ENCODE measurements at regions of chr3 and their contacts with region 1.

Region 1: DNA sequence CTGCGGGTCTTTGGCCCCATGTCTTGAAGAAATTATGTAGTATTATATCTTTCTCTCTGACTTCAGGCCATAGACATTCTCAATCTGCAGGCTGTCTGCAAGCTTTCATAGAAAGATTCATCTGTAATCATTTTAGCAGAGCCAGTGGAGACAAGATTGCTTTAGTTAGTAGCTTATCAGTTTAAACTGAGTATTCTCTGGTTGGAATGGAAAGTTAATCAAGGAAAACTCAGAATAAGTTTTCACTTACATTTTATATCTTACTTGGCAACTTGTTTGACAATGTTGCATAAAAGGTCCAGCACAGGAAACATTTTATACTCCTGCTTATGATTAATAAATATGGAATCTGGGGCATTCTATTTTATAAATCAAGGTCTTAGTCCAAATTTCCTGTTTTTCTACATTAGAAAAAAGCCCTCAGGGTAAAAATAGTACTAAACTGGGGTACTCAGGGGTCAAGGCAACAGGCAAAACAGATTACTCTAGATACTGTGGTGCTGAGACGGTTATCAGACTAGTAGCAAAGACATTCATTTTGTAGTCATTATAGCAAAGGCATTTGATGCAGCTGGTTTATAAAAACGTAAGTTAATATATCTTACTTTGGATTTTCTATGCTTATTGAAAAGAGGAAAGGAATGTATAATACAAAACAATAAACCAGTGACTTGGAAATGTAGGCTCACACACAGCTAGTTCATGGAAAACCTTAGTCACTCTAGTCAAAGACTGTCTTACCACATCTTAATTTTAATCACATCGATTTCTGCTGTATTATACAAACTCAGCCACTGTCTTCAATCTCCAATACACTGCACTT is 45.2 kb upstream of the FILIP1L start:
- DNase-seq: no peak
- ATAC-seq: peak; percentile 39
- H3K4me3 ChIP-seq: no peak overlapping the region
- H3K27ac ChIP-seq: peak overlapping the region; percentile 79 to 96
- H3K4me1 ChIP-seq: peaks cover 0 to 11% of the 10 kb centered on the region in 2 donors
- H3K27me3 ChIP-seq: no peaks in the 10 kb centered on the region

Region 2: GRCh38 chr3:99842826-99843589 is 316.5 kb before region 1 on chr3:
- intact Hi-C with region 1: loop called in 1 of 2 experiments (anchors 5 kb)
- DNase-seq: no peak
- ATAC-seq: peak; percentile 70
- H3K4me3 ChIP-seq: no peak overlapping the region
- H3K27ac ChIP-seq: peak overlapping the region; percentile 63 to 91
- H3K4me1 ChIP-seq: peaks cover 2 to 3% of the 10 kb centered on the region in 2 donors
- H3K27me3 ChIP-seq: no peaks in the 10 kb centered on the region

Region 3: DNA sequence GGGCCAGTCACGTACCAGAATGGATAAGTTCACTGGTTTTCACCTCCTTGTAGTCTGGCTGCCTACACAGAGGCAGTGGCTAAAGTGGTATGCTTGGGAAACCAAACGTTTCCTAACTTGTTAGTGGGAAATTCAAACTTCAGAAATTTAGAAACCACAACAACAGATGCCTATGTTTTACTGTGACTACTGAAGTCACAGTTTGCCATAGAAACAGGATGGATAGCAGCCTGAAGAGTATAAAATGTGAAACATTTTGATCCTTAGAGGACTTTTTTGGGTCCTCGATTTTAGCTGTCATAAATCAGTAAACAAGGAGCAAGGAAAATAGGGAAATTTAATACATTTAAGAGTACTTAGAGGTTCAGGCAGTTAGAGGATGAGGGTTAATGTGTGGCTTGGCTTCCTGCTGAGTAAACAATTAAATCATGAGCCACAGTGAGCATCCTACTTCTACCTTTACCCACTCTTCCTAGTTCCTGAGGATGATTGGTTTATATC is 293.2 kb before region 1 on chr3:
- intact Hi-C with region 1: loop called in 1 of 2 experiments (anchors 10 kb)
- DNase-seq: no peak
- ATAC-seq: no peak
- H3K4me3 ChIP-seq: peak overlapping the region; percentile 31 to 59
- H3K27ac ChIP-seq: peak overlapping the region; percentile 51 to 93
- H3K4me1 ChIP-seq: peaks cover 9 to 22% of the 10 kb centered on the region in 2 donors
- H3K27me3 ChIP-seq: no peaks in the 10 kb centered on the region

Region 4: DNA sequence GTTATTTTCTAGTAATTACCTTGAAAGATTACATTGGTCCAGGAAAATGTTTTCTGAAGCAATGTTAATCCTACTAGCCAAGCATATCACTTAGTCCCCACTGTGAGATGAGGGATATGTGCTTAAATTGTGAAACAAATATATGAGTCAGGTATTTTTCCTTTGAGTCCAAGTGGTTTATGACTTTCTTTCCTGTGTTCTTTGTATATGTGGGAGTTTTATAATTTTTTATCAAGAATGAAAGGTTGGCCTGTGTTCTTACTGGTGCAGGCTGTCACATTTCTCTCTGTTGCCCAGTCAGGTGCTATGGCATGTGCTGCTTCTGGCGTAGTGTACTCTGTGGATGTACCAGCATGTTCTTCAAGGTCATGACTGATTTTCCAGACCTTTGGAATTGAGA is 194.5 kb before region 1 on chr3:
- intact Hi-C with region 1: loop called in 1 of 2 experiments (anchors 10 kb)
- DNase-seq: no peak
- ATAC-seq: no peak
- H3K4me3 ChIP-seq: no peak overlapping the region
- H3K27ac ChIP-seq: peak overlapping the region in 1 of 2 donors; percentile 98
- H3K4me1 ChIP-seq: peaks cover 7 to 8% of the 10 kb centered on the region in 2 donors
- H3K27me3 ChIP-seq: no peaks in the 10 kb centered on the region

Region 5: GRCh38 chr3:100006570-100007271 is 152.8 kb before region 1 on chr3:
- intact Hi-C with region 1: no loop called
- DNase-seq: no peak
- ATAC-seq: peak; percentile 47
- H3K4me3 ChIP-seq: no peak overlapping the region
- H3K27ac ChIP-seq: no peak overlapping the region
- H3K4me1 ChIP-seq: peaks cover 2 to 8% of the 10 kb centered on the region in 2 donors
- H3K27me3 ChIP-seq: no peaks in the 10 kb centered on the region

Region 6: GRCh38 chr3:100073899-100074307 is 85.6 kb before region 1 on chr3:
- intact Hi-C with region 1: loop called in 1 of 2 experiments (anchors 5 kb)
- DNase-seq: no peak
- ATAC-seq: peak; percentile 47
- H3K4me3 ChIP-seq: no peak overlapping the region
- H3K27ac ChIP-seq: peak overlapping the region; percentile 20 to 57
- H3K4me1 ChIP-seq: peaks cover 9% of the 10 kb centered on the region in 2 donors
- H3K27me3 ChIP-seq: no peaks in the 10 kb centered on the region

Region 7: DNA sequence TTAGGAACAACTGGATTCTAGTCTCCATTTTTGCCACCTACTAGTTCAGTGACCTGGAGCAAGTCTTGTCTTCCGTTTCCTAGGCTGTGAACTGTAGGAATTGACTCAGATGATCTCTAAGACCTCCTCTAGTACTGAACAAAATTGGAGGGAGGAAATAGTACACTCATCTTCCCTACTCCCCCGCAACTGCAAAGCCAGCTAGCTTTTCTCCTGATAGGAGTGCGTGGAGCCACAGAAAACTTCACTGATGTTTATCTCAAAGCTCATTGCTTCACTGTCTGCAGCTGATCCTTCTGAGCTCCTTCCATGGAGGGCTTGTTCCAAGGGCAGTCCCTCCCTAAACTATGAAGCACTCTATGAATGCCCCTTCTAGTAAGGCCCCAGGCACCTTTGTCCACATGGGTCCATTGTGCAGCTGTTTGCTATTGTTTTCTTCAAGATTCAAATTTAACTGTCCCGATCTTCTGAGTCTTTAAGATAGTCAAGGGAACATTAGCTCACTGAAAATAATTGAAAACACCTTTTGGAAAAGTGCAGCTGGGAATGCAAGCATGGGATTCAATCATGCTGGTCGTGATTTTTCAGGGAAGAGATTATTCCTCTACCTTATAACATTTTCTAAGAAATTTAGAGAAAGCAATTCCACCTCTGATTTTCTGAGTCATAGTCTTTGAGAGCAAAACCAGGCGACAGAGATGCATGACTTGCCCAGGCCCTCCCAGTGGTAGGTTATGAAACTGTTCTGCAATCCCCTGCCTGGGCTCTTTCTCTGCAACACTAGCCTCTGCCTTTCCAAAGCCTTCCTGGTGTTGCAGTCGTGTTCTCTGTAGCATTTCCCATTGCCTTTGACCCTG is 69.5 kb before region 1 on chr3:
- intact Hi-C with region 1: loop called in 1 of 2 experiments (anchors 10 kb)
- DNase-seq: peak in 1 of 2 donors; percentile 45
- ATAC-seq: peak; percentile 54
- H3K4me3 ChIP-seq: no peak overlapping the region
- H3K27ac ChIP-seq: no peak overlapping the region
- H3K4me1 ChIP-seq: peaks cover 0 to 3% of the 10 kb centered on the region in 2 donors
- H3K27me3 ChIP-seq: no peaks in the 10 kb centered on the region

Region 8: DNA sequence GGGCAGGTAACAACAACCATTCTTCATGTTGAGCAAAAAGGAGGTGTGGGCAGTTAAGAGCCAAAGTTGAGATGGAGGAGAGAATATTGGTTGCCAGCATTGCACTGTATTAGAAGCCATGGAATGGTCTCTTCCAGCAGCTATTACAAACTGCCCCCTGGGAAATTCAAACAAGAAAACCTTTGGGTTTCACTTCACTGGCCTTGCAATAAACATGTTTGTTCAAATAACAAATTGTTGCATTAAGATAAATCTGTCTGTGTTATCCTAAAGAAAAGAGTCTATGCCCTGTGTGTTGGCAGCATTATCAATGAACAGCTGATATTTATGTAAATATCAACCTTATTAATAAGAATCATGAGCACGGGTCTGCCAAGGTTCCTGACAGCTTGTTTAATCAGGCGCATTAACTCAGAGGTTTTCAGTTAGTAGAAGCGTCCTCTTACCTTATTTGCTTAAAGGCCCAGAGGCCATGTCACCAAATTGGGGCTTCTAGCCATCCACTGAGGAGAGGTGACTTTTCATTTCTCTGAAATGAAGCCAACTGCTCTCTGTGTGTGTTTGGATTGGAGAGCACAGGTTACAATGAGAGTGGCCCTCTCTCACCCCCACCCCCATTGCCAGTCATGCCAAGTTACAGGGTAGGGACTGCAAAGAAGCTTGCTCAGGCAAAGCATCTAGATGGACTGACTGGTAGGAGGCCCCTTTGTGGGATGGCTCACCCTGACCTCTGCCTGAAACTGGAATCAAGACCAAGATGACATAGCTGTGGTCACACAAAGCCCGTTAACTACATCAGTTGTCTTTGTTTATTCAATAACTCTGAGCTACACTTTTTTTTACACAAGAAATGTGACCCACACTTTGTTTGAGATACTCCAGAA is 55.7 kb before region 1 on chr3:
- intact Hi-C with region 1: loop called (anchors 5 kb)
- DNase-seq: no peak
- ATAC-seq: peak; percentile 41
- H3K4me3 ChIP-seq: no peak overlapping the region
- H3K27ac ChIP-seq: peak overlapping the region; percentile 59 to 87
- H3K4me1 ChIP-seq: peaks cover 10 to 14% of the 10 kb centered on the region in 2 donors
- H3K27me3 ChIP-seq: no peaks in the 10 kb centered on the region

Region 9: DNA sequence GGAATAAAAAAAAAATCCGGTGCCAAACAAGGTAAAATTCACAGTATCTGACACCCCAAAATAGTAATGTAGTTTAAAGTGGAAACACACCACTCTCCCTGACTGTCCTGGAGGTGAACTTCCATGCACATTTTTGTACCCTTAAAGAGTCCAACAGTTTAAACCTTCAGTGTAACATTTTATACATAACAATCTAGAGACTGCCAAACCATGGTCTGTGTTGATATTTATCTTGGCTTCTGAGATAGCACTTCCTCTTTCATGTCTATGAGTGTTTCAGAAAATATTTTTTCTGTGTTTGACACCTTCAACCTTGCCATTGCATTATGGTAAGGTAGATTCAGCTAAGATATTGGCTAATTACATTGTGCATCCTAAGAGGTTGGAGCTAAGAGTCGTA is 346.8 kb after region 1 on chr3:
- intact Hi-C with region 1: no loop called
- DNase-seq: no peak
- ATAC-seq: no peak
- H3K4me3 ChIP-seq: no peak overlapping the region
- H3K27ac ChIP-seq: no peak overlapping the region
- H3K4me1 ChIP-seq: peaks cover 0 to 3% of the 10 kb centered on the region in 2 donors
- H3K27me3 ChIP-seq: no peaks in the 10 kb centered on the region

Region 10: GRCh38 chr3:101270149-101270548 is 1110.6 kb after region 1 on chr3:
- intact Hi-C with region 1: no loop called
- DNase-seq: no peak
- ATAC-seq: no peak
- H3K4me3 ChIP-seq: no peak overlapping the region
- H3K27ac ChIP-seq: no peak overlapping the region
- H3K4me1 ChIP-seq: peaks cover 0 to 3% of the 10 kb centered on the region in 2 donors
- H3K27me3 ChIP-seq: no peaks in the 10 kb centered on the region